Activated CD4-positive, alpha-beta T cell treated with anti-CD3 and anti-CD28 coated beads, Interleukin-2, amount 10 ng/mL, durations not matched to agents 24 days and 14 days (primary cell): ENCODE measurements at regions of chr15 and their contacts with region 1.

Region 1: GRCh38 chr15:91022075-91022835 is at the start of gene VPS33B:
- DNase-seq: peak; percentile 94
- H3K4me3 Mint-ChIP-seq: peak within 1 kb of the TSS; percentile 88
- H3K27ac Mint-ChIP-seq: peak within 1 kb of the TSS; percentile 77
- H3K4me1 Mint-ChIP-seq: peaks cover 34% of the 10 kb centered on the region
- H3K27me3 Mint-ChIP-seq: no peaks in the 10 kb centered on the region
- total RNA-seq, gene VPS33B: 18.9 and 19.5 TPM in 2 replicates

Region 2: GRCh38 chr15:90994417-90995311 is 27.6 kb before region 1 on chr15 and contains the start of gene PRC1:
- intact Hi-C with region 1: loop called (anchors 1 kb)
- DNase-seq: peak; percentile 100
- H3K4me3 Mint-ChIP-seq: peak within 1 kb of the TSS; percentile 100
- H3K27ac Mint-ChIP-seq: peak within 1 kb of the TSS; percentile 100
- H3K4me1 Mint-ChIP-seq: peaks cover 27% of the 10 kb centered on the region
- H3K27me3 Mint-ChIP-seq: no peaks in the 10 kb centered on the region
- total RNA-seq, gene PRC1: 85.0 and 86.2 TPM in 2 replicates

Region 3: GRCh38 chr15:91649831-91650321 is 627.6 kb after region 1 on chr15:
- intact Hi-C with region 1: no loop called
- DNase-seq: no peak
- H3K4me3 Mint-ChIP-seq: no peak overlapping the region
- H3K27ac Mint-ChIP-seq: no peak overlapping the region
- H3K4me1 Mint-ChIP-seq: no peaks in the 10 kb centered on the region
- H3K27me3 Mint-ChIP-seq: peaks cover 13% of the 10 kb centered on the region